Aorta (tissue), 5 donors: ENCODE measurements at regions of chr2 and their contacts with region 1.

Region 1: GRCh38 chr2:24382363-24383073 is 22.2 kb upstream of the ITSN2 start:
- DNase-seq: peak in 1 of 2 donors; percentile 62
- ATAC-seq: peak; percentile 89
- H3K4me3 ChIP-seq: no peak overlapping the region
- H3K27ac ChIP-seq: no peak overlapping the region
- H3K4me1 ChIP-seq: no peaks in the 10 kb centered on the region
- H3K27me3 ChIP-seq: no peaks in the 10 kb centered on the region

Region 2: DNA sequence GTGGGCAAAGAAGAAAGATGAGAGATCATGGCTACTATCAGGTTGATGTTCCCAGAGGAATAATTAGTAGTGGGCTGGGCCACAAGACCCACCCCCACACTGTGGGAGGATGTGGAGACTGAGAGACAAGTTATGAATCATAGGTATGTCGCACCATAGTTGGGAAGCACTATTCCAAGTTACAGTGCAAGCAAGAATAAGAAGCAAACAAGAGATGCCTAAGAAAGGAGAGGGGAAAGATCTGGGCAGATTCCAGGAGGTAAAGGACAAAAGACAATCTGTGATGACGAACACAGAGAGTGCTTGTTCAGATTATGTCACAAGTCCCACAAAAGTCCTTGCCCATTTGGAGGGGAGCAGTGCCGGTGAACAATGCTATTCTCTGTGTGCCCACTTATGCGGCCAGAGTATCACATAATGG is 151.0 kb before region 1 on chr2:
- intact Hi-C with region 1: loop called in 1 of 2 experiments (anchors 5 kb)
- DNase-seq: no peak
- ATAC-seq: no peak
- H3K4me3 ChIP-seq: no peak overlapping the region
- H3K27ac ChIP-seq: no peak overlapping the region
- H3K4me1 ChIP-seq: no peaks in the 10 kb centered on the region
- H3K27me3 ChIP-seq: no peaks in the 10 kb centered on the region

Region 3: DNA sequence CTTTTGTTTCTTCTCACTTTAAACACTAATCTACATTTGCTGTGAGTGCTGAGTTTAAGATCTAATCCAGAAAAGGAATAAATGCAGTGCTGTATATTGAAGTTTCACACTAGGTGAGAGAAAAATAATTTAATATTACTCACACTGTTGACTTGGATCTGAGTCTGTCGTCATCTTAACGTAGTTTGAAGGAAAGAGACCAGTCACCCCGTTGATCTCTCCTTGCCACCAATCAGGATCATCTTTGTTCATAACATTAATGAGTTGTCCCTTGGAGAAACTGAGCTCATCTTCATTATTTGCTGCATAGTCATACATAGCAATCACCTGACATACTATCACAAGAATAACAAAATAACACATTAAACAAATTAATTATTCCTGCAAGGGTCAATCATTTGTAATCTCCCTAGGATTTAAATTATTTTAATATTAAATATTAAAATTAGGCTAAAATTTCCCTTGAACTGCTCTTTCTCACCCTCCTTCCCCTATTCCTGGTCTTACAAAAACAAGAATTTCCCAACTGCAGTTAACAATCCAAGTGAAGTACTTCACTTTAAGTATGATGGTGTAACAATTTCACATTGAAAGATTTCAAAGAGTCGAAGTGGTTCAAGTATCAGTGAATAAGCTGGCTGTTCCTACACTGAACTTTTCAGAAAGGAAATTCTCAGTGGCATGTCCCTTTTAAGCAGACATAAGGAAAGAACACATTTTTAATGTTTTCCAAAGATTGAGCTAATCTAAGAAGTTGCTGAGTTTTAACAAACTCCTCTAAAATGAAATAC is 136.3 kb before region 1 on chr2:
- intact Hi-C with region 1: loop called in 1 of 2 experiments (anchors 10 kb)
- DNase-seq: no peak
- ATAC-seq: no peak
- H3K4me3 ChIP-seq: no peak overlapping the region
- H3K27ac ChIP-seq: no peak overlapping the region
- H3K4me1 ChIP-seq: peaks cover 0 to 1% of the 10 kb centered on the region in 2 donors
- H3K27me3 ChIP-seq: no peaks in the 10 kb centered on the region

Region 4: DNA sequence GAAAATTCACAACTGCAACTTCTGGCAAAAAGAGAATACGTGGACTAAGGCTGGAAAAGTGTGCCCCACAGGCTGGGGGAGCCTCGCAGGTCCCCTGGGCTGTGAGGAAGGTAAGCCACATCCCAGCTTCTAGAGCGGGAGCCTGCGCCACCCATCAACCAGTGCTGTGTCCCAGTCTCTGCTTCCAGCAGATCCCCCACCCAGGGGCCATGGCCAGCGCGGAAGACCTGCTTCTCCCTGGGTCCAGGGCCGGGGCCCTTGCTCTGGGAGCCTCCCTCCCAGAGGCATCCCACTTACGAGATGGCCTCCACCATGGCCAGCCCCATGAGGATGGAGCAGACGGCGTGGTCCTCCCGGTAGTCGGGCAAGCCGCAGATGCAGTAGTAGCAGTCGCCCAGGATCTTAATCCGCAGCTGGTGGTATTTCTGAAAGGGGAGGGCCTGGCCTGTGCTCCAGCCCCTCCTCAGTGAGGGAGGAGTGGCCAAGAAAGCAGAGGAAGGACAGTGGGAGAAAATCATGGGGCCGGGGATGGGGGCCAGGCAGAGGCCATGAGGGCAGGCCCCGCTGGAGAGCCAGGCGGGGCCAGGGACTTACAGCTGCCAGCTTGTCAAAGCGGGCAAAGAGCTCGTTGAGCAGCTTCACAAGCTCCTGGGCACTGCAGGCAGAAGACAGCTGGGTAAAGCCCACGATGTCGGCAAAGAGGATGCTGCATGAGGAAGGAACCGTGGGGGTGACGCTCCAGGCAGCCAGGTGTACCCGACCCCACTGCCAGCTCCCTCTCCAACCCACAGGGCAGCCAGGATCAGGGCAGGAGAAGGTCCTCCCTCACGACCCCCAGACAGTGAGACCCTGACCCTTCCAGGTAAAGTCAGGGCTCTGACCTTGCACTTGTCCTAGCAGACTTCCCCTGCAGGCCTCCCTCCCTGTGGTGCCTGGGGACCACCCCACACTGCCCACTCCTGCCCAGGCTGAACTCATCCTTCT is 458.7 kb after region 1 on chr2:
- intact Hi-C with region 1: no loop called
- DNase-seq: peak in 1 of 2 donors; percentile 69
- ATAC-seq: no peak
- H3K4me3 ChIP-seq: no peak overlapping the region
- H3K27ac ChIP-seq: no peak overlapping the region
- H3K4me1 ChIP-seq: no peaks in the 10 kb centered on the region
- H3K27me3 ChIP-seq: no peaks in the 10 kb centered on the region